ENCODE measurements at regions of chr1 and their contacts with region 1.

Region 1: DNA sequence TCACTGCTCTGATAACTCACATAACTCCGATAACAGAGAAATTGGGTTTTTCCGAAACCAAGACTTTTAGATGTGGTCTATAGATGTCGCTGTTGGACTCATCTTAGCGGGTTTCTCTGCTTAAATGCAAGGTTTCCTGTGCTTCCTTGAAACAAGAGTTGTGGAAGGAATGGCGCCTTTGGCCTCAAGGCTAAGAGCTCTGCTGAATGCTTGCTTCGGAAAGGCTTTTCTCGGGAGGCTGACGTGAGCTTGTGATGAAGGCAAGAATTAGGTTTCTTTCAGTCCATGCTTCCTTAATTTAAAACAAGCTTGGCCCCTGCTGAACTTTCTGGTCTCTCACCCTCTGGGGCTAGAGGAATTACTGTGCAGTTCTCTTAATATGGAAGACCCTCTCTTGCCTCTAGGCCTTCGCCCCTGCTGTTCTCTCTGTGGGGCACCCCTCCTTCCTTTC is 113.5 kb downstream of the MAP3K21 start:
- DNase-seq: peak; percentile 49
- H3K4me3 ChIP-seq: no peak overlapping the region; a peak in 1 of 4 replicates
- H3K27ac ChIP-seq: no peak overlapping the region
- H3K4me1 ChIP-seq: peaks cover 0 to 6% of the 10 kb centered on the region in 2 experiments; a peak in 1 of 4 replicates
- H3K27me3 ChIP-seq: no peaks in the 10 kb centered on the region
- CTCF ChIP-seq: peak; percentile 83
- EP300 ChIP-seq: no peak
- RAD21 ChIP-seq: peak; percentile 97

Region 2: GRCh38 chr1:232589812-232590743 is 850.9 kb before region 1 on chr1:
- CTCF ChIA-PET with region 1: no interaction called
- POLR2A ChIA-PET with region 1: no interaction called
- DNase-seq: no peak
- H3K4me3 ChIP-seq: no peak overlapping the region
- H3K27ac ChIP-seq: no peak overlapping the region; a peak in 1 of 4 replicates
- H3K4me1 ChIP-seq: peaks cover 0 to 14% of the 10 kb centered on the region in 2 experiments; a peak in 2 of 4 replicates
- H3K27me3 ChIP-seq: no peaks in the 10 kb centered on the region
- CTCF ChIP-seq: no peak
- EP300 ChIP-seq: no peak
- RAD21 ChIP-seq: no peak

Region 3: DNA sequence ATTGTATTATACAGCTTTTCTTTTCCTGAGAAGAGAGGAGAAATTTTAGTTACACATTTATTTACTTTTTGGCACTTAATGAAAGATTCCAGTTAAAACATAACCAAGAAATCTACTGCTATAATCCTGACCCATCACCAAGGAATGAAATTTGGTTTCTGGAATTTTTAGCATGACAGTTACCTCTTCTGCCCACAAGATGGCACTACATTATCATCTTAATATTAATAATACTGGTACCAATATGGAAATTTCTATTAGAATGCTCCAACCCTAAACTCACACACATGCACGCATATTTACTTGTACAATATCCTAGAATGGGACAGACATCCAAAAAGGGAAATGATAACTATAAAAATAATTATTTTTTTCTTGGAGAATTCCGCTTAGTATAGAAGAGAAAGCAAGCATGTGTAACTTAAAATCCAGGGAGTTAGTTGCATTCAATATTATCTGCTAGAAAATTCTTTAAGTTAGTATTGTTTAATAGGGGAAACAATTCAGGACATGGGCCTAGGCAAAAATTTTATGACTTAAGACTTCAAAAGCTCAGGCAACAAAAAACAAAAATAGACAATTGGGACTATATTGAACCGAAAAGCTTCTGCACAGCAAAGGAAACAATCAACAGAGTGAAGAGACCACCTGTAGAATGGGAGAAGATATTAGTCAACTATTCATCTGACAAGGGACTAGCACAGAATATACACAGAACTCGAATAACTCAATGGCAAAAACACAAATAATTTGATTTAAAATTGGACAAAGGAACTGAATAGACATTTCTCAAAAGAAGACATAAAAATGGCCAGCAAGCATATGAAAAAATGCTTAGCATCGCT is 76.1 kb before region 1 on chr1:
- CTCF ChIA-PET with region 1: interaction called, 21 read pairs
- POLR2A ChIA-PET with region 1: no interaction called
- DNase-seq: peak; percentile 34
- H3K4me3 ChIP-seq: no peak overlapping the region
- H3K27ac ChIP-seq: no peak overlapping the region
- H3K4me1 ChIP-seq: no peaks in the 10 kb centered on the region
- H3K27me3 ChIP-seq: no peaks in the 10 kb centered on the region
- CTCF ChIP-seq: peak; percentile 82
- EP300 ChIP-seq: no peak
- RAD21 ChIP-seq: peak; percentile 74

Region 4: DNA sequence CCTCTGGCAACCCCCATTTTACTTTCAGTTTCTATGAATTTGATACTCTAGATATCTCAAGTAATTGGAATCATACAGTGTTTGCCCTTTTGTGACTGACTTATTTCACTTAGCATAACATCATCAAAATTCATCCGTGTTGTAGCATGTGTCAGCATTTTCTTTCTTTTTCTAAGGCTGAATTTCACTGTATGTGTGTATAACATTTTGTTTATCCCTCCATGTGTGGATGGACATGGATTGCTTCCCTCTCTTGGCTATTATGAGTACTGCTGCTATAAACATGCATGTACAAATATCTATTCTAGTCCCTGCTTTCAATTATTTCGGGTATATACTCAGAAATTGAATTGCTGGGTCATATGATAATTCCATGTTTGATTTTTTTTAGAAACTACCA is 16.2 kb before region 1 on chr1:
- CTCF ChIA-PET with region 1: interaction called, 17 read pairs
- POLR2A ChIA-PET with region 1: no interaction called
- DNase-seq: no peak
- H3K4me3 ChIP-seq: no peak overlapping the region
- H3K27ac ChIP-seq: no peak overlapping the region
- H3K4me1 ChIP-seq: no peaks in the 10 kb centered on the region
- H3K27me3 ChIP-seq: no peaks in the 10 kb centered on the region
- CTCF ChIP-seq: peak; percentile 38
- EP300 ChIP-seq: no peak
- RAD21 ChIP-seq: no peak; the same call in 1 of the 2 replicates

Region 5: DNA sequence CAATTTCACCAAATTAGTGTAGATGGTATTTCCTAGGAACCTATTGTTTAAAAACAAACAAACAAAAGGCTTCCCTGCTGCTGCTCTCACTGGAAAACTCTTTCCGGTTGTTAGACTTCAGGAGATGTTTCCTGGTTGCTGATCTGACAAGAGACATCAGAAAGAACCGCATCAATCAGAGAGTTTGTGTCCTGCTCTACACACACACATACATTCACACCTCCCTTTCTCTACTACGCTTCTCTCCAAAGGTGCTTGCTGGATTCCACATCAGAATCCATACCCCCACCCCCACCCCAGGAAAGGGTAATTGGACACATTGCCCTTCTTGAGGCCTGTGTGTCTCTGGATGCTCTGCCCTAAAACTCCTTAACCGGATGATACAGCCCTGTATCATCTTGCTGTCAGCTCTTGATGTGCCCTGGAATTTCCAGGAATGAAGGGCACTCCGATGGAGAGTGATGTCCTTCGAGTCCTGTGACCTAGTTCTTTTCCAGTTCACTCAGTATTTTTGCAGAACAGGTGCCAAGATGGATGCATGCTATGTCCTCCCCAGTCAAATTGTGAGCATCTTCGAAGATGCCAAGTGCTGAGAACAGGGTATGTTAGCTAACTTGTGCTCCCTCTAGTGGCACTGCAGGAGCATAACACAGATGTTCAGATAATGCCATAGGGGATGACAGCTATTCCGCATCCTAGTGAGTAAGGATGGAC is 349.8 kb after region 1 on chr1:
- CTCF ChIA-PET with region 1: interaction called, 64 read pairs
- POLR2A ChIA-PET with region 1: no interaction called
- DNase-seq: peak; percentile 69
- H3K4me3 ChIP-seq: no peak overlapping the region; a peak in 1 of 4 replicates
- H3K27ac ChIP-seq: no peak overlapping the region
- H3K4me1 ChIP-seq: no peaks in the 10 kb centered on the region
- H3K27me3 ChIP-seq: no peaks in the 10 kb centered on the region
- CTCF ChIP-seq: peak; percentile 94
- EP300 ChIP-seq: no peak
- RAD21 ChIP-seq: peak; percentile 96

Region 6: GRCh38 chr1:233904633-233905415 is 463.8 kb after region 1 on chr1 and contains the start of gene SLC35F3:
- CTCF ChIA-PET with region 1: interaction called, 29 read pairs
- POLR2A ChIA-PET with region 1: no interaction called
- DNase-seq: peak; percentile 91
- H3K4me3 ChIP-seq: peak within 1 kb of the TSS; percentile 37 to 49
- H3K27ac ChIP-seq: no peak within 1 kb of the TSS
- H3K4me1 ChIP-seq: no peaks in the 10 kb centered on the region; a peak in 2 of 4 replicates
- H3K27me3 ChIP-seq: peaks cover 17% of the 10 kb centered on the region; the same call in 1 of the 2 replicates
- CTCF ChIP-seq: peak; percentile 30; the same call in 1 of the 2 replicates
- EP300 ChIP-seq: no peak
- RAD21 ChIP-seq: peak; percentile 41; the same call in 1 of the 2 replicates
- polyA plus RNA-seq, gene SLC35F3: 0.87 and 1.5 TPM in 2 replicates

Region 7: DNA sequence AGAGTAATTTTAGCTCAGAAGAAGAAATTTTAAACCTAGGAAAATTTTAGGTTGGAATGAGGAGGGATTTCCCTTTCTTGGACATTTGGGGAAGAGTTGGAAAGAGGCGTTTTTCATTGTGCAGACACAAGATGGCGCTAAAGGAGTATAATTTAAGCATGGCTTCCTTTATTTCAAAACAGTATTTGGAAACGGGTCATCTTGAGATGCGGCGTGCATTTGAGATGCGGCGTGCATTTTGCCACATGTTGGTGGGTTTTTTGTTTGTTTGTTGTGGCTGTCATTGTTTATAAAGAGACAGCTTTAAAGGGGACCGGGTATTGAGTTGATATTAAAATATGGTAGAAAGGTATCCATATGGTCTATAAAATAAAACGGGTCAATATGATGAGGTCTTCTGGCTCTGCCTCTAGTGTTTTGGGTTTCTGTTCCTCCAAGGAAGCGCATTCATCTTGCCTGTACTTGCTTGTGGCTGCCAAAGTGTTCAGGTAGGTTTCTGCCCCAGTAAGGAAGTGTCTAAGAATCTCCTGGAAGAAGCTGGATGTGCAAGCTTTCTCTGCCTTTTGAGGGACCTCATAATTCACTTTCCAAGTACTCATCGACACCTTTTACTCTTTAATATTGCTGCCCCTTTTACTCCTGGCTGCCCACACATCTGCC is 673.8 kb after region 1 on chr1:
- CTCF ChIA-PET with region 1: interaction called, 63 read pairs
- POLR2A ChIA-PET with region 1: no interaction called
- DNase-seq: peak; percentile 54
- H3K4me3 ChIP-seq: peak overlapping the region; percentile 7 to 44; a peak in 3 of 4 replicates
- H3K27ac ChIP-seq: no peak overlapping the region
- H3K4me1 ChIP-seq: peaks cover 0 to 5% of the 10 kb centered on the region in 2 experiments; a peak in 2 of 4 replicates
- H3K27me3 ChIP-seq: no peaks in the 10 kb centered on the region
- CTCF ChIP-seq: peak; percentile 84
- EP300 ChIP-seq: no peak
- RAD21 ChIP-seq: peak; percentile 87